ENCODE measurements at regions of chrX and their contacts with region 1.

Region 1: GRCh38 chrX:50204364-50204899 is at the start of gene CCNB3:
- DNase-seq: peak; percentile 67
- ATAC-seq: peak; percentile 85
- H3K4me3 ChIP-seq: peak within 1 kb of the TSS; percentile 62
- H3K27ac ChIP-seq: peak within 1 kb of the TSS; percentile 26; the same call in 1 of the 2 replicates
- H3K4me1 ChIP-seq: peaks cover 15% of the 10 kb centered on the region
- H3K27me3 ChIP-seq: no peaks in the 10 kb centered on the region
- CTCF ChIP-seq: peak; percentile 70
- total RNA-seq, gene CCNB3: 0.33 and 2.1 TPM in 2 replicates

Region 2: DNA sequence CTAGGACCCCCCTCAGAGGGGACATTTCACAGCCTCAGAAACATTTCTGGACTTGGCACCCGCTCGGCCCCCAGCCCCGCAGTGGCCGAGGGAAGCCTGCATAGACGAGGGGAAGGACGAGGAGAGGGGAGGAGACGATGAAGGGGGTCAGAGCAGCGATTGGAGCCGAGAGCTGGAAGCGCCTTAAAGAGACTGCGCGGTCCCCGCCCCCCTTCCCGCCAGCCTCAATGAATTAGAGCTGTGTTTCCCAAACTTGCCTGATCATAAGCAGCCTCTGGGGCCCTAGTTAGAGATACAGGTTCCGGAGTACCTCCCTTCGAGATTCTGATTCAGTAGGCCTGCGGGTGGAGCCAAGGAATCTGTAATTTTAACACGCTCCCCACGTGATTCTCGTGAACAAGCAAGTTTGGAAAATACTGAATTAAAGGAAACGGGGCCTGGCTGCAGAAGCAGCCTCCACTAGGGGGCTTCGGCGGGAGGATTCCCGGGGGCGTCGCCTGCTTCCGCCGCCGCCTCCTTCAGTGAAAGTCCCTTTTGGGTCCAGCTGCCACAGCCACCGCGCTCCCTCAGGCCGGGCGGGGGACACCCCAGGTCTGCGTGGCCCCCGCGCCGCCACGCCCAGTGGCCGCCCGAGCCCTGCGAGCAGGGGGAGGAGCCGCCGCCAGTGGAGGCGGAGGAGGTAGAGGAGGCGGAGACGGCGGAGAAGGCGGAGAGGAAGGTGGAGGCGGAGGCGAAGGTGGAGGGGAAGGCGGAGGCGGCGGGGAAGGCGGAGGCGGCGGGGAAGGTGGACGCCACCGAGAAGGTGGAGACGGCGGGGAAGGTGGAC is 325.4 kb before region 1 on chrX and contains the start of gene USP27X:
- CTCF ChIA-PET with region 1: no interaction called
- POLR2A ChIA-PET with region 1: no interaction called
- intact Hi-C with region 1: loop called (anchors 5 kb)
- DNase-seq: peak; percentile 78
- ATAC-seq: peak; percentile 86
- H3K4me3 ChIP-seq: peak within 1 kb of the TSS; percentile 68
- H3K27ac ChIP-seq: peak within 1 kb of the TSS; percentile 54
- H3K4me1 ChIP-seq: peaks cover 8% of the 10 kb centered on the region; the same call in 1 of the 2 replicates
- H3K27me3 ChIP-seq: no peaks in the 10 kb centered on the region
- CTCF ChIP-seq: peak; percentile 59
- total RNA-seq, gene USP27X: 0.62 and 2.7 TPM in 2 replicates

Region 3: GRCh38 chrX:49915361-49916222 is 288.8 kb before region 1 on chrX:
- CTCF ChIA-PET with region 1: no interaction called
- POLR2A ChIA-PET with region 1: no interaction called
- intact Hi-C with region 1: loop called (anchors 1 kb)
- DNase-seq: peak; percentile 69
- ATAC-seq: peak; percentile 90
- H3K4me3 ChIP-seq: no peak overlapping the region
- H3K27ac ChIP-seq: no peak overlapping the region
- H3K4me1 ChIP-seq: no peaks in the 10 kb centered on the region
- H3K27me3 ChIP-seq: no peaks in the 10 kb centered on the region
- CTCF ChIP-seq: peak; percentile 85

Region 4: DNA sequence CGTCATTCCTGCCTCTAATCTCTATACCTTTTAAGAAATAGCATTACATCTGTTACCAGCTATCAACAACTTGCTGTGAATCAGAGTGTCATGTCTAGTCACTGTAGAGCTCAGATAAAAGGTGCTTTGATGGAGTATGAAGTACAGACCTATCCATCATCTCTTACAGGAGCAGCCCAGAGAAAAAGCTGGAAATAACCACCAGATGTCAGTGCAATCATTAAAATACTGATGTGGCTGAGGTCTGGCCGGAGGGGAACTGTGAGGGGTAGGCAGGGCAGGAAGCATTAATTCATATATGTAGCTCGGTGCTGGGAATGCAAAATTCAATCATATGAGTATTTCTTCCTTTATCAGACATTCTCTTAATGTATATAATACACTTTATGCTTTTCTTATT is 104.2 kb before region 1 on chrX:
- CTCF ChIA-PET with region 1: no interaction called
- POLR2A ChIA-PET with region 1: no interaction called
- intact Hi-C with region 1: loop called (anchors 1 kb)
- DNase-seq: peak; percentile 45
- ATAC-seq: peak; percentile 51
- H3K4me3 ChIP-seq: no peak overlapping the region
- H3K27ac ChIP-seq: no peak overlapping the region
- H3K4me1 ChIP-seq: no peaks in the 10 kb centered on the region
- H3K27me3 ChIP-seq: no peaks in the 10 kb centered on the region
- CTCF ChIP-seq: peak; percentile 62